Heart left ventricle (tissue), 16 donors: ENCODE measurements at regions of chr19 and their contacts with region 1.

Region 1: DNA sequence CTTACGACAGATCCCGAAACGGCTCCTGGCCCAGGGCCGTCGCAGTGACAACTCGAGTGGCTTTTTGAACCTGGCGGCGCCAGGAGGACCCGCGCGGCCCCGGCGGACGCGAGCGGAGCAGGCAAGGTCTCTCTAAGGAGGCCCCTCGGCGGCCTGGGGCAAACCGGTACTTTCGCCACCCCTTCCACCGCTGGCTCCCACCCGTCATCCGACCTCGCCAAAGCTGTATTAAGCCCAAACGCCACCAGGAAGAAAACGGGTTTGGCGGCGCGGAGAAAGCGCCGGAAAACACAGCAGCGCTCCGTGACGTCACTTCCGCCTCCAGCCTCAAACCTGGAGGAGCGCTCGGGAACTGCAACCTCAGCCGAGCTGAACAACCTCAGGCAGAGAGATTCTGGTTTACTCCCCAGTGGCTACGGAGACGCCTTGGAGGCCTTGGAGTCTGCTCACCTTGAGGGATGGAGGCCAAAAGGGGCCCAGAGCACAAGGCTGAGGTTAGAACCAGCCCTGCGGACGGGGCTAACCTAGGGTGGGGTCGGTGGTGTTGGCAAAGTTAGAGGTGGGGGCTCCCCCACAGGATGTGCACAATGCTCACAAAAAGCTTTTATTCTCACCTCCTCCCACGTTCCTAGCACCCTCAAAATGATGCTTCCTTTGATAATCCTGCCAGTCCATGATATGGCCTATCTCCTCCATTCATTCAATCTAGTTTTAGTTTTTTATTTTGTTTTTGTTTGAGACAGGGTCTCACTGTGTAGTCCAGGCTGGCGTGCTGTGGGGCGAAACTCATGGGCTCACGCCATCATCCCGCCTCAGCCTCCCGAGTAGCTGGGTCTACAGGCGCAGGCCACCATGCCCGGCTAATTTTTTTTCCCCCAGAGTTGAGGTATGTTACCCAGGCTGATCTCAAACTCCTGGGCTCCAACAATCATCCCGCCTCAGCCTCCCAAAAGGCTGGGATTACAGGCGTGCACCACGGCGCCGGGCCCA is at the start of gene ZNF266:
- DNase-seq: peak; percentile 89 to 94 (median 91)
- ATAC-seq: peak; percentile 91 to 97 (median 96)
- H3K4me3 ChIP-seq: peak within 1 kb of the TSS; percentile 30 to 95 (median 80)
- H3K27ac ChIP-seq: peak within 1 kb of the TSS; percentile 68 to 95 (median 92)
- H3K4me1 ChIP-seq: peaks cover 0 to 27% (median 16%) of the 10 kb centered on the region in 12 donors
- H3K27me3 ChIP-seq: no peaks in the 10 kb centered on the region
- CTCF ChIP-seq: peak; percentile 40 to 80 (median 70)
- POLR2A ChIP-seq: peak in 1 of 2 donors; percentile 46
- total RNA-seq, gene ZNF266: 5.7 to 11.1 (median 7.7) TPM

Region 2: GRCh38 chr19:9205501-9206113 is 230.0 kb before region 1 on chr19:
- intact Hi-C with region 1: loop called in 3 of 10 experiments (anchors 5 to 10 kb)
- DNase-seq: peak; percentile 58 to 82 (median 63)
- ATAC-seq: peak; percentile 69 to 77 (median 75)
- H3K4me3 ChIP-seq: peak overlapping the region in 10 of 12 donors; percentile 20 to 44 (median 40)
- H3K27ac ChIP-seq: no peak overlapping the region
- H3K4me1 ChIP-seq: peaks cover 0 to 5% (median 0%) of the 10 kb centered on the region in 12 donors
- H3K27me3 ChIP-seq: peaks cover 0 to 20% (median 0%) of the 10 kb centered on the region in 9 donors
- CTCF ChIP-seq: peak; percentile 82 to 99 (median 88)
- POLR2A ChIP-seq: no peak

Region 3: DNA sequence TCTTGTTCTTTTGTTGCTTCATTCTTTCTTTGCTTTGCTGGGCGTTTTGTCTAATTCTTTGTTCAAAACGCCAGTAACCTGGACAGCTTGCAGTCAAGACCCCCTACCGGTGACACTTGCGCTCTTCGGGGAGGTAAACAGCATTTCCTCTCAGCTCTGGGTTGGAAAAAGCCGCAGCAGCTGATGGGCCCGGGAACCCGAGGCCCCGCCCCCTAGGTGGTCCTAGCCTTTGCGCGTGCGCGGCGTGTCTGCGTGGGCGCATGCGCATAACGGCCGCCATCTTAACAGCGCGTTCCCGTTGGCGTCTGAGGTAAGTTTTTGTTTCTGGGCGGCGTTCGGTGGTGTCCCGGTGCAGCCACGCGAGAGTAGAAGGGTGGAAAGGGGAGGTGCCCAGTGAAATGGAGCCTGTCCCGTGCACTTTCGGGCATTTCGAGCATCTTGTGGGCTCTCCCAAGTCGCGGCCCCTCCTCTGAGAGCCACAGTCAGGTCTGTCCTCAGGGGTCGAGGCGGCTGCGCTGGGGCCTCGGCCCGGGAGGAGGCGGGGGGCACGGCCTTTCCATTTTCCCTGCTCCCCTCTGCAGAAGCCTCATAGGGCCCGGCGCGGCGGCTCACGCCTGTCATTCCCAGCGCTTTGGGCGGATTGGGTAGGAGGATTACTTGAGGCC is 111.5 kb before region 1 on chr19 and contains the start of gene ZNF559:
- intact Hi-C with region 1: loop called in 3 of 10 experiments (anchors 10 kb)
- DNase-seq: peak; percentile 93 to 97 (median 94)
- ATAC-seq: peak; percentile 97 to 99 (median 98)
- H3K4me3 ChIP-seq: peak within 1 kb of the TSS; percentile 51 to 96 (median 72)
- H3K27ac ChIP-seq: peak within 1 kb of the TSS; percentile 69 to 93 (median 88)
- H3K4me1 ChIP-seq: peaks cover 0 to 17% (median 6%) of the 10 kb centered on the region in 12 donors
- H3K27me3 ChIP-seq: no peaks in the 10 kb centered on the region
- CTCF ChIP-seq: peak in 8 of 12 donors; percentile 4 to 44 (median 29)
- POLR2A ChIP-seq: peak in 1 of 2 donors; percentile 67
- total RNA-seq, gene ZNF559: 12.3 to 19.1 (median 15.1) TPM

Region 4: GRCh38 chr19:9538183-9539058 is 102.8 kb after region 1 on chr19 and contains the start of gene ZNF426:
- intact Hi-C with region 1: loop called in 2 of 10 experiments (anchors 5 kb)
- DNase-seq: peak; percentile 89 to 93 (median 91)
- ATAC-seq: peak; percentile 94 to 99 (median 98)
- H3K4me3 ChIP-seq: peak within 1 kb of the TSS; percentile 45 to 99 (median 76)
- H3K27ac ChIP-seq: peak within 1 kb of the TSS; percentile 87 to 97 (median 96)
- H3K4me1 ChIP-seq: peaks cover 0 to 18% (median 12%) of the 10 kb centered on the region in 12 donors
- H3K27me3 ChIP-seq: no peaks in the 10 kb centered on the region
- CTCF ChIP-seq: peak in 1 of 12 donors; percentile 8
- POLR2A ChIP-seq: peak in 1 of 2 donors; percentile 39
- total RNA-seq, gene ZNF426: 10.1 to 21.9 (median 14.3) TPM

Region 5: DNA sequence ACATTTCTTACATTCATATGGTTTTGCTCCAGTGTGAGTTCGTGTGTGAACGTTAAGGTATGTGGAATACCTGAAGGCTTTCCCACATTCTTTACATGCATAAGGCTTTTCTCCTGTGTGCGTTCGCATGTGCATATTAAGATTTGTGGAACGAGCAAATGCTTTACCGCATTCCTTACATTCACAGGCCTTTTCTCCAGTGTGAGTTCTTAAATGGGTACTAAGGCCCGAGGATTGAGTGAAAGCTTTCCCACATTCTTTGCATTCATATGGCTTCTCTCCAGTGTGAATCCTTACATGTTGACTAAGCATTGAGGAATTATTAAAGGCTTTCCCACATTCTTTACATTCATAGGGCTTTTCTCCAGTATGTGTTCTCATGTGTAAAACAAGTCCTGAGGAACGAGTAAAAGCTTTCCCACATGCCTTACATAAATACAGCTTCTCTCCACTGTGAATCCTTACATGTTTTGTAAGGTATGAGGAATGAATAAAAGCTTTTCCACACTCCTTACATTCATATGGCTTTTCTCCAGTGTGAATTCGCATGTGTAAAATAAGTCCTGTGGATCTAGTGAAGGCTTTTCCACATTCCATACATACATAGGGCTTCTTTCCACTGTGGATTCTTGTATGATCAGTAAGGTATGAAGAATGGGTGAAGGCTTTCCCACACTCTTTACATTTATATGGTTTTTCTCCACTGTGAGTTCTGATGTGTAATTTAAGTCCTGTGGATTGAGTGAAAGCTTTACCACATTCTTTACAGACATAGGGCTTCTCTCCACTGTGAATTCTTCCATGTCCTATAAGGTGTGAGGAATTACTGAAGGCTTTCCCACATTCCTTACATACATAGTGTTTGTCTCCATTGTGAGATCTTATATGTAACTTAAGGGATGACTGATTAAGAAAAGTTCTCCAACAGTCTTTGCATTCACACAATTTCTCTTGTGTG is 322.2 kb after region 1 on chr19:
- intact Hi-C with region 1: no loop called
- DNase-seq: no peak
- ATAC-seq: no peak
- H3K4me3 ChIP-seq: no peak overlapping the region
- H3K27ac ChIP-seq: no peak overlapping the region
- H3K4me1 ChIP-seq: no peaks in the 10 kb centered on the region
- H3K27me3 ChIP-seq: no peaks in the 10 kb centered on the region
- CTCF ChIP-seq: no peak
- POLR2A ChIP-seq: no peak

Region 6: GRCh38 chr19:9818734-9819589 is 383.4 kb after region 1 on chr19 and contains the start of gene FBXL12:
- intact Hi-C with region 1: loop called in 1 of 10 experiments (anchors 5 kb)
- DNase-seq: peak; percentile 100
- ATAC-seq: peak; percentile 95 to 96 (median 96)
- H3K4me3 ChIP-seq: peak within 1 kb of the TSS; percentile 69 to 98 (median 88)
- H3K27ac ChIP-seq: peak within 1 kb of the TSS; percentile 88 to 98 (median 96)
- H3K4me1 ChIP-seq: peaks cover 4 to 26% (median 18%) of the 10 kb centered on the region in 12 donors
- H3K27me3 ChIP-seq: no peaks in the 10 kb centered on the region
- CTCF ChIP-seq: no peak
- POLR2A ChIP-seq: peak; percentile 36 to 84
- total RNA-seq, gene FBXL12: 9.8 to 17.6 (median 12.2) TPM